CD4-positive, alpha-beta memory T cell (primary cell): ENCODE measurements at regions of chr3 and their contacts with region 1.

Region 1: GRCh38 chr3:113838631-113839209 is at the start of gene GRAMD1C:
- DNase-seq: peak; percentile 81 to 84 (median 83)
- H3K4me3 ChIP-seq: peak within 1 kb of the TSS; percentile 32 to 68
- H3K4me3 Mint-ChIP-seq: peak within 1 kb of the TSS; percentile 71 to 84 (median 81)
- H3K27ac ChIP-seq: no peak within 1 kb of the TSS
- H3K27ac Mint-ChIP-seq: peak within 1 kb of the TSS in 4 of 7 donors; percentile 31 to 56 (median 38)
- H3K4me1 ChIP-seq: peaks cover 7% of the 10 kb centered on the region
- H3K4me1 Mint-ChIP-seq: peaks cover 0 to 6% (median 6%) of the 10 kb centered on the region in 4 donors
- H3K27me3 ChIP-seq: no peaks in the 10 kb centered on the region
- H3K27me3 Mint-ChIP-seq: peaks cover 0 to 1% of the 10 kb centered on the region in 2 donors
- total RNA-seq, gene GRAMD1C: 2.6 to 2.8 TPM

Region 2: GRCh38 chr3:113736548-113737089 is 102.1 kb before region 1 on chr3:
- CTCF ChIA-PET with region 1: interaction called, 27 read pairs
- POLR2A ChIA-PET with region 1: no interaction called
- intact Hi-C with region 1: loop called (anchors 1 kb)
- DNase-seq: peak; percentile 47 to 72 (median 71)
- H3K4me3 ChIP-seq: no peak overlapping the region
- H3K4me3 Mint-ChIP-seq: peak overlapping the region in 1 of 8 donors; percentile 15
- H3K27ac ChIP-seq: peak overlapping the region; percentile 32
- H3K27ac Mint-ChIP-seq: peak overlapping the region; percentile 48 to 88 (median 77)
- H3K4me1 ChIP-seq: peaks cover 32% of the 10 kb centered on the region
- H3K4me1 Mint-ChIP-seq: peaks cover 35 to 61% (median 42%) of the 10 kb centered on the region in 4 donors
- H3K27me3 ChIP-seq: no peaks in the 10 kb centered on the region
- H3K27me3 Mint-ChIP-seq: no peaks in the 10 kb centered on the region

Region 3: GRCh38 chr3:113764698-113765097 is 74.0 kb before region 1 on chr3:
- CTCF ChIA-PET with region 1: no interaction called
- POLR2A ChIA-PET with region 1: no interaction called
- intact Hi-C with region 1: no loop called
- DNase-seq: no peak
- H3K4me3 ChIP-seq: no peak overlapping the region
- H3K4me3 Mint-ChIP-seq: no peak overlapping the region
- H3K27ac ChIP-seq: no peak overlapping the region
- H3K27ac Mint-ChIP-seq: no peak overlapping the region
- H3K4me1 ChIP-seq: no peaks in the 10 kb centered on the region
- H3K4me1 Mint-ChIP-seq: peaks cover 0 to 3% (median under 1%) of the 10 kb centered on the region in 4 donors
- H3K27me3 ChIP-seq: no peaks in the 10 kb centered on the region
- H3K27me3 Mint-ChIP-seq: no peaks in the 10 kb centered on the region

Region 4: GRCh38 chr3:113795693-113796092 is 43.0 kb before region 1 on chr3:
- CTCF ChIA-PET with region 1: no interaction called
- POLR2A ChIA-PET with region 1: no interaction called
- intact Hi-C with region 1: no loop called
- DNase-seq: no peak
- H3K4me3 ChIP-seq: no peak overlapping the region
- H3K4me3 Mint-ChIP-seq: no peak overlapping the region
- H3K27ac ChIP-seq: no peak overlapping the region
- H3K27ac Mint-ChIP-seq: peak overlapping the region in 1 of 7 donors; percentile 50
- H3K4me1 ChIP-seq: no peaks in the 10 kb centered on the region
- H3K4me1 Mint-ChIP-seq: no peaks in the 10 kb centered on the region
- H3K27me3 ChIP-seq: no peaks in the 10 kb centered on the region
- H3K27me3 Mint-ChIP-seq: no peaks in the 10 kb centered on the region

Region 5: GRCh38 chr3:113867506-113867905 is 28.8 kb after region 1 on chr3:
- CTCF ChIA-PET with region 1: no interaction called
- POLR2A ChIA-PET with region 1: no interaction called
- intact Hi-C with region 1: no loop called
- DNase-seq: no peak
- H3K4me3 ChIP-seq: no peak overlapping the region
- H3K4me3 Mint-ChIP-seq: no peak overlapping the region
- H3K27ac ChIP-seq: no peak overlapping the region
- H3K27ac Mint-ChIP-seq: no peak overlapping the region
- H3K4me1 ChIP-seq: no peaks in the 10 kb centered on the region
- H3K4me1 Mint-ChIP-seq: no peaks in the 10 kb centered on the region
- H3K27me3 ChIP-seq: no peaks in the 10 kb centered on the region
- H3K27me3 Mint-ChIP-seq: peaks cover 2 to 3% of the 10 kb centered on the region in 2 donors